CD4-positive, alpha-beta memory T cell (primary cell): ENCODE measurements at regions of chr12 and their contacts with region 1.

Region 1: DNA sequence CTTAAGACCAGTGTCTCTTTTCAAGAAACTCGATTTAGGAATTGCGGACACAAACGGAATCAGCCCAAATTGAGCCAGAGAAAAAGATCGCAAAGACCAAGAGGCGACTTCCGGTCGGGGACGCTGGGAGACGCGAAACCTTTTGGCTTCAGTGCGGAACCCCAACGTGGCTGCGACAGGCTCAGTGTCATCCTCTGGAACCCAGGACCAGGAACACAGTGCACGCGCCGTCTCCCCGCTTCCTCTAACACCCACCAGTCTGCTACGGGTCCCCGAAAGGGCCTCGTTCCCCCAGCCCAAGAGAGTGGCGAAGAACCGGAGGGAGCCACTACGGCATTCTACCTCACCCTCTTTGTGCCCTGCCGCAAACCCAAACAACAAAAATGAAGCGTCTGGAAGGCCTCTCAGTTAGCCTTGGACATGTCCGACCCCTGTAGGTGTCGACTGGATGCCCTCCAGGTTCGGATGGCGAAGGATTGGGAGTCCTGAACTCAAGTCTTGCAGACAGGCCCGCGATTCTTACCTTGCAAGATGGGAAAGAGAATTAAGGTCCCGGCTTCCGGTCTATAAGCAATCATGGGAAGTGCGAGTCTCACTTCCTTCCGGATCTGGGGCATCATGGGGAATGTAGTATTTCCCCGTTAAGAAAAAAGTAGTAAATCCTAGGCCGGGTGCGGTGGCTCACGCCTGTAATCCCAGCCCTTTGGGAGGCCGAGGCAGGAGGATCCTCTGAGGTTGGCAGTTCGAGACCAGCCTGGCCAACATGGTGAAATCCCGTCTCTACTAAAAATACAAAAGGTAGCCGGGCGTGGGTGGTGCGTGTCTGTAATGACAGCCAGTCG is at the start of gene RPL6:
- DNase-seq: peak; percentile 83 to 89 (median 84)
- H3K4me3 ChIP-seq: peak within 1 kb of the TSS; percentile 82 to 89
- H3K4me3 Mint-ChIP-seq: peak within 1 kb of the TSS; percentile 98 to 100 (median 100)
- H3K27ac ChIP-seq: peak within 1 kb of the TSS; percentile 89
- H3K27ac Mint-ChIP-seq: peak within 1 kb of the TSS; percentile 90 to 100 (median 100)
- H3K4me1 ChIP-seq: peaks cover 26% of the 10 kb centered on the region
- H3K4me1 Mint-ChIP-seq: peaks cover 19 to 46% (median 28%) of the 10 kb centered on the region in 4 donors
- H3K27me3 ChIP-seq: no peaks in the 10 kb centered on the region
- H3K27me3 Mint-ChIP-seq: no peaks in the 10 kb centered on the region
- total RNA-seq, gene RPL6: 1,625 to 1,665 TPM

Region 2: GRCh38 chr12:112125250-112125999 is 283.9 kb before region 1 on chr12 and contains the start of gene TRAFD1:
- CTCF ChIA-PET with region 1: interaction called, 4 read pairs
- POLR2A ChIA-PET with region 1: no interaction called
- intact Hi-C with region 1: loop called (anchors 10 kb)
- DNase-seq: peak; percentile 97 to 99 (median 98)
- H3K4me3 ChIP-seq: peak within 1 kb of the TSS; percentile 63 to 99
- H3K4me3 Mint-ChIP-seq: peak within 1 kb of the TSS; percentile 78 to 93 (median 88)
- H3K27ac ChIP-seq: peak within 1 kb of the TSS; percentile 86
- H3K27ac Mint-ChIP-seq: peak within 1 kb of the TSS; percentile 83 to 95 (median 91)
- H3K4me1 ChIP-seq: peaks cover 52% of the 10 kb centered on the region
- H3K4me1 Mint-ChIP-seq: peaks cover 15 to 50% (median 33%) of the 10 kb centered on the region in 4 donors
- H3K27me3 ChIP-seq: no peaks in the 10 kb centered on the region
- H3K27me3 Mint-ChIP-seq: no peaks in the 10 kb centered on the region
- total RNA-seq, gene TRAFD1: 38.7 to 42.7 TPM

Region 3: DNA sequence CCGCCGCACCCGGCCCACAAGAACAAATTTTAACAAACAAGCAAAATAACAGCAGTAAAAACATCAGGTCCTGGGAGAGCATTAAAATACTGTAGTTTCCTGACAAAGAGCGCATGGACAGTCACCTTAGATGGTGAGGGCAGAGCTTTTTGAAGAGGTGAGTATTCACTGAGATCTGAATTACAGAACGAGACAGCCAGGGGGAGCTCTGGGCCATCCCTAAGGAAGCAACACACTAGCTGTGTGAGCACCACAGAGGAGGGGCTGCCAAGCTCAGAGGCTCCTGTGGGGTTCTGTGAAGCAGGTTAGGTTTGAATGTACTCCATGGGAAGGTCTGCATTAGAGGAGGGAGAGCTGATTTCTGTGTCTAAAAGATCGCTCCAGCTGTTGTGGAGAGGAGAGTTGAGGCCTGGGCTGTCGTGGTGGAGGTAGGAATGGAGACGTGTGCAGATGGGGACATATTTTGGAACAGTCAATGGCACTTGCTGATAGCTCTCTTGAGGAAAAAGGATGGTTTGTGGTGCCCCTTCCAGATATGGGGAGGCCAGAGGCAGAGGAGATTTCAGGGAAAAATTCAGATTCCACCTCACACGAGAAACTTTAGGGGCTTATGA is 211.1 kb before region 1 on chr12:
- CTCF ChIA-PET with region 1: interaction called, 4 read pairs
- POLR2A ChIA-PET with region 1: no interaction called
- intact Hi-C with region 1: loop called (anchors 1 kb)
- DNase-seq: peak in 4 of 5 donors; percentile 21 to 32 (median 26)
- H3K4me3 ChIP-seq: no peak overlapping the region
- H3K4me3 Mint-ChIP-seq: no peak overlapping the region
- H3K27ac ChIP-seq: no peak overlapping the region
- H3K27ac Mint-ChIP-seq: peak overlapping the region in 2 of 7 donors; percentile 28 to 52
- H3K4me1 ChIP-seq: no peaks in the 10 kb centered on the region
- H3K4me1 Mint-ChIP-seq: peaks cover 0 to 3% (median under 1%) of the 10 kb centered on the region in 4 donors
- H3K27me3 ChIP-seq: no peaks in the 10 kb centered on the region
- H3K27me3 Mint-ChIP-seq: no peaks in the 10 kb centered on the region

Region 4: GRCh38 chr12:112314981-112315380 is 94.3 kb before region 1 on chr12:
- CTCF ChIA-PET with region 1: no interaction called
- POLR2A ChIA-PET with region 1: no interaction called
- intact Hi-C with region 1: no loop called
- DNase-seq: no peak
- H3K4me3 ChIP-seq: no peak overlapping the region
- H3K4me3 Mint-ChIP-seq: no peak overlapping the region
- H3K27ac ChIP-seq: no peak overlapping the region
- H3K27ac Mint-ChIP-seq: peak overlapping the region in 1 of 7 donors; percentile 7
- H3K4me1 ChIP-seq: no peaks in the 10 kb centered on the region
- H3K4me1 Mint-ChIP-seq: no peaks in the 10 kb centered on the region
- H3K27me3 ChIP-seq: no peaks in the 10 kb centered on the region
- H3K27me3 Mint-ChIP-seq: no peaks in the 10 kb centered on the region